Motor neuron (in vitro differentiated cells): ENCODE measurements at regions of chr11 and their contacts with region 1.

Region 1: DNA sequence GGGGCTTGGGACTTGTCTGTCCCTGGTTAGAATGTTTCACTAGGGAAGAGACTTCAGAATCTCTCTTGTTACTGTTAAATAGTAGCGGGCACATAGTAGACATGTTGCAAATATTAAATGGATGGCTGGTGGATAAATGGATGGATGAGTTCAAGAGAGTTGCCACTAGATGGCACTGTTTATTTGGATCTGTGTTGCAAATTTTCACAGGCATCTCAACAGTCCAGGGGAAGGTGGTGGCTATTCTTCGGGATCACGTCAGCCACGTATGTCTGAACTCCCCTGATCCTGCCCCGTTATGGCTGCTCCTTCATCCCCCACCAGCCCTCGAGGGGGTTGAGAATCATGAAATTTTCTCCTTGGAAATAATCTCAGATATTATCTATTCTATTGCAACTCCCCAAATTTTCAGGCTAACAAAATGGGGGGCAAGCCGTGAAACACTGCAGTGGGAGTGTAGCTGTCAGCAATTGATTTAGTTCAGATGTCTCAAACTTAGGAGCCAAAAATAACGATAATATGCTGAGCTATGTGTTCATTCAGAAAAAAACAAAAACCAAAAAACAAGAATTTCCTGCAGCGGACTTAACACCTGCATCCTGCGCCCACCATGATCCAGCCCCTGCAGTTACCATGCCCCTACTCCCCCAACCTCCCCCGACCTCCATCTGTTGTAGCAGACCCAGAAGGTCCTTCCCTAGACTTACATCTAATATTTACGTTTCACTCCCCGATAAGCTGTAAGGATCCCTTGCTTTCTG is 29.1 kb upstream of the BIRC3 start:
- ATAC-seq: peak; percentile 74 to 98 (median 86)
- H3K4me3 ChIP-seq: no peak overlapping the region
- H3K27ac ChIP-seq: no peak overlapping the region
- H3K4me1 ChIP-seq: no peaks in the 10 kb centered on the region

Region 2: DNA sequence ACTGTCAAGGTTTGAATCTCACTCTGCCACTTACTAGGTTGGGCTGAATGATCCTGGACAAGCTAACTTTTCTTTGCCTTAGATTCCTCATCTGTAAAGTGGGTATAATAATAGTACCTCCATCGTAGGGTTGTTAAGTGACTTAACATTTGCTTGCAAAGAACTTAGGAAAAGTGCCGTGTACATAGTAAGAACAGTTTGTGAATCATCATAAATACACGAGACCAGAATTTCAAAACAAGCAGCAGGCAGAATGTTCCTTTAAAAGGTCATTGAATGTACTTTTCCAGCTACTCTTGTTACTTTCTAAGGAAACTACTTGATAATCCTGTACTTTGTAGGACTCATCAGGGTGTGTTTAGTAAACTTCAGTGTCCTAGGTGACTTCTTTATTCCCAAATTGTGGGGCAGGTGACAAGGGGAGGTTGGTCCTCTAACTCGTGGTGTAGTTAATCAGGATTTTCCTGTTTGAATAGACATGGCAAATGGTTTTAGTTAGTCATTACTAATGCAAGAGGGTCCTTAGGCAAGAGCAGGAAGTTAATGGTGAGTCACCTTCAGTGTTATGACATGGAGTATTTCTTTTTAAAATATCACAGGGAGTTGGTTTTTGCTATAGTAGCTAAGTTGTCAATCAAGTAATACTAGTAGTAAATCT is 110.0 kb before region 1 on chr11:
- in situ Hi-C with region 1: loop called in 1 of 9 experiments (anchors 25 kb)
- ATAC-seq: peak in 2 of 8 experiments; percentile 81 to 94
- H3K4me3 ChIP-seq: no peak overlapping the region
- H3K27ac ChIP-seq: no peak overlapping the region
- H3K4me1 ChIP-seq: no peaks in the 10 kb centered on the region

Region 3: DNA sequence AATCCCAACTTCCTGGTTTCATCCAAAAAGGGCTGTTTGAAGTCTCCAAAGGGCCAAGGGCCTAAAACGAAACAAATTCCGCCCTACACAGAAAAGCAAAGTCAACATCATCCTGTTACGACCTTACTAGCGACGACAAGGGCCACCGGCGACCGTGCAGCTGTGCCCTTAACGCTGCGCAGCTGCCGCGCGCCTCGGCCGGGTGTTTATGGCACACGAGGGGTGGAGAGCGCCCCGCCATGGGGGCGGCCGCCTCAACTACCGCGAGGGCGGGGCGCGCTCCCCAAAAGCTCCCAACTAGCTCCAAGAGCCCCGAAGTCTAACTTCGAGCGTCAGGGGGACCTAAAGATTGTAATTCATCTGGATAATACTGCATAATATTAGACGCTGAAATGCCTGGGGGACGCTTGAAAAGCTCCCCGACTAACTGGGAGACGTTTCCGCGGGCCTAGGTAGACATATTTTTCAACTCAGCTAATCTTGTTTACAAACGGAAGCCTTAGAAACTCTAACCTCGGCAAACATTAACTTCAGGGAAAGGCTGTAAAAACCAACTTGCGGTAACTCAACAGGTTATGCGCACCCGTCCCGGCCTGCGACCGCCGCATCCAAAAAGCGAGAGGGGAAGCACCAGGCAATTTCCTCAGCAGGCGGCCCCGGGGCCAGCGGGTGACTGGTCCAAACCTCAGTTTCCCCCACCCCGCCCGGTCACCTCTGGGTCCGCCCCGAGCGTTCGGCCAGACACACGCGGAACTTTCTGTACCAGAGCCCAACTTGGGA is 163.7 kb after region 1 on chr11:
- in situ Hi-C with region 1: no loop called
- ATAC-seq: peak; percentile 43 to 62 (median 55)
- H3K4me3 ChIP-seq: peak overlapping the region; percentile 51 to 71 (median 60)
- H3K27ac ChIP-seq: peak overlapping the region in 1 of 2 donors; percentile 61
- H3K4me1 ChIP-seq: peaks cover 16 to 20% of the 10 kb centered on the region in 2 donors